ENCODE measurements at regions of chr20 and their contacts with region 1.

Region 1: DNA sequence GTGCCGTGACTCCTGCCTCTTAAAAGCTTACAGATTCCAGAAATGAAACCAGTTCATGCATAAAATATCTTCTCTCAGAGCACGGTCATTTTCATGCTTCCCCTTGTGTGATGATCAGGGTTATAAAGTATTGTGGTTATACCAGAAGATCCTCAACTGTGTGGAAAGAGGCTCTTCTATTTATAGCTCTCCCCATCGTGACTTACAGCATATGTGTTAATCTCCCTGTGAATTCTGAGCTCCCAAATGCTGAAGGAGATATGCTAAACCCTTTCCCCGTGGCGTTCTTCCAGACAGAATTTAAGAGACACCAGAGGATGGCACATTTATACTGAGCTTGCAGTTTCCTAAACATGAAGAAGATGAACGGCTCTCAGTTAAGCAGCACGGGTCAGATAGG is 158.8 kb downstream of the CDH26 start:
- DNase-seq: peak; percentile 67 to 80 (median 67)
- H3K4me3 ChIP-seq: peak overlapping the region; percentile 23 to 69 (median 42)
- H3K4me3 Mint-ChIP-seq: peak overlapping the region; percentile 65 to 84
- H3K27ac ChIP-seq: peak overlapping the region; percentile 72 to 87
- H3K27ac Mint-ChIP-seq: peak overlapping the region; percentile 79 to 91 (median 90)
- H3K4me1 ChIP-seq: peaks cover 66 to 74% of the 10 kb centered on the region in 2 donors
- H3K4me1 Mint-ChIP-seq: peaks cover 72% of the 10 kb centered on the region
- H3K27me3 ChIP-seq: no peaks in the 10 kb centered on the region
- H3K27me3 Mint-ChIP-seq: peaks cover 0 to 5% (median 0%) of the 10 kb centered on the region in 3 donors
- CTCF ChIP-seq: no peak

Region 2: GRCh38 chr20:59723607-59724456 is 393.2 kb before region 1 on chr20:
- intact Hi-C with region 1: loop called in 1 of 2 experiments (anchors 10 kb)
- DNase-seq: peak; percentile 39 to 84 (median 51)
- H3K4me3 ChIP-seq: peak overlapping the region in 1 of 3 experiments; percentile 53
- H3K4me3 Mint-ChIP-seq: peak overlapping the region; percentile 44 to 83
- H3K27ac ChIP-seq: peak overlapping the region in 1 of 2 donors; percentile 5
- H3K27ac Mint-ChIP-seq: peak overlapping the region in 6 of 7 donors; percentile 84 to 95 (median 92)
- H3K4me1 ChIP-seq: peaks cover 52 to 55% of the 10 kb centered on the region in 2 donors
- H3K4me1 Mint-ChIP-seq: peaks cover 67% of the 10 kb centered on the region
- H3K27me3 ChIP-seq: peaks cover 58 to 80% of the 10 kb centered on the region in 2 donors
- H3K27me3 Mint-ChIP-seq: peaks cover 84 to 92% (median 87%) of the 10 kb centered on the region in 3 donors
- CTCF ChIP-seq: no peak

Region 3: GRCh38 chr20:59933849-59934596 is 183.0 kb before region 1 on chr20:
- intact Hi-C with region 1: no loop called
- DNase-seq: peak; percentile 65 to 75 (median 65)
- H3K4me3 ChIP-seq: peak overlapping the region; percentile 49 to 77 (median 65)
- H3K4me3 Mint-ChIP-seq: peak overlapping the region; percentile 78 to 84
- H3K27ac ChIP-seq: no peak overlapping the region
- H3K27ac Mint-ChIP-seq: no peak overlapping the region
- H3K4me1 ChIP-seq: peaks cover 40 to 51% of the 10 kb centered on the region in 2 donors
- H3K4me1 Mint-ChIP-seq: peaks cover 41% of the 10 kb centered on the region
- H3K27me3 ChIP-seq: no peaks in the 10 kb centered on the region
- H3K27me3 Mint-ChIP-seq: peaks cover 0 to 6% (median 5%) of the 10 kb centered on the region in 3 donors
- CTCF ChIP-seq: peak; percentile 99